Activated T-helper 1 cell treated with anti-CD3 and anti-CD28 coated beads, Interleukin-12 subunit alpha, Interleukin-12 subunit beta, Interleukin-2, Interleukin-4 antibody, amounts not matched to agents 30 ng/mL and 10 ng/mL and 1 ng/mL, durations not matched to agents 14 hours and 24 hours and 36 hours (primary cell): ENCODE measurements at regions of chr12 and their contacts with region 1.

Region 1: DNA sequence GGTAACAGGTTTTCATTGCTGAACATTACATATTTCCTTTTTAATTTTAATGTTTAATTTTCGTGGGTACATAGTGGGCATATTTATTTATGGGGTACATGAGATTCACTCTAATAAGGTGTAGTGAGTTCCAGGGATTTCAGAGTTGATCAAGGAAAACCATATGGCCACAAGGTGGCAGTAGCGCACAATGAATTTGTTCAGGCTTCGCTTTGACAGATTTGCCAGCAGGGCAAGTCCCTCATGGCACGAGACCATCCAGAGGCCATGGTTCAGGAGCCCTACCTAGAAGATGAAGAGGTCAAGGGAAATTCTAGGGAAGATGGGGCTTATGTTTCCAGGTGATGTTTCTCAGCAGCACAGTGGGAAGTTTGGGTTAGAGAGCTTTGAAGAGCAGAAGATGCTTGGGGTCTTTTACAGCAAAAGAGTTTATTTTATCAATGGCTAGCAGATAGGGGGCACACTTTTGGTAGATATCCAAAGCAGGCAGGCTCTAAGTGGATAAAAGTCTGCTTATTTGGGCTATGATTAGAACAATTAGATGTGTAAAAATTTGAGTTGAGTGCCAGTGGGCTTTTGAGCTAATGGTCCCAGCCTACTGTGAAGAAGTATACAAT is 1004.4 kb downstream of the AACS start:
- DNase-seq: peak; percentile 11
- H3K4me3 Mint-ChIP-seq: no peak overlapping the region
- H3K27ac Mint-ChIP-seq: no peak overlapping the region
- H3K4me1 Mint-ChIP-seq: no peaks in the 10 kb centered on the region
- H3K27me3 Mint-ChIP-seq: no peaks in the 10 kb centered on the region

Region 2: GRCh38 chr12:126518596-126519200 is 449.0 kb after region 1 on chr12:
- intact Hi-C with region 1: no loop called
- DNase-seq: no peak
- H3K4me3 Mint-ChIP-seq: no peak overlapping the region
- H3K27ac Mint-ChIP-seq: no peak overlapping the region
- H3K4me1 Mint-ChIP-seq: no peaks in the 10 kb centered on the region
- H3K27me3 Mint-ChIP-seq: no peaks in the 10 kb centered on the region

Region 3: DNA sequence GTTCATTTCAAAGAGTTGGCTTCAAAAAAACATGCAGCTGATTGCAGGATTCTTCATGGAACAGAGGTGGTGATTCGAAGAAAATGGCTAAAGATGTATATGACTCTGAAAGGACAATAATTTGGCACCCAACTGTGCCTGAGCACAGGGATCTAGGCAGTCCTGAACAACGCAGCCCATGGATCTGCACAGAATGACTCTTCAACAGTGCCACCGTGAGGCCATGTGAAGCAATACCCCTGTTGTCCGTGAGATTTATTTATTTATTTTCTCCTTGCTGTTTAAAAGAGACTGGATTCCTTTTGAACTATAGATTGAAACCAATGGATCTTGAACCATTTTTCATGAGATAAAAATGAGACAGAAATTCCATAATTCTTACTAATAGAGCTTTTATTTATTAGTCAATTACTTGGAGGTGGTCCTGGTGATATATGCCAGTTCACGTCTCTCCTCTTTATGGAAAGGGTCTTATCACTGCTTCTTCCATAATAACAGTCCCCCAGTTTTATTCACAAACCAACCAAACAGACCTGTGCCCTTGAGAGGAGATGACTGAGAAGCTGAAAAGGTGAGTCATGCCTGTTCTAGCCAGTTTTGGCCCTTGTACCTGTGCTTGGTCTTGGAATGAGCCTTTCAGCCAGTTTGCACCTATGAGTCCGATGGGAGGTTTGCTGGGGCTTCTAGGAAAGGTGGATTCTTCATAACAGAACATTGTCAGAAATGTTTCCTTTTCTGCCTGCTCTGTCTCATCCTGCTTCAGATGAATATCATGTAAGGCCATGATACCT is 593.8 kb after region 1 on chr12:
- intact Hi-C with region 1: loop called (anchors 5 kb)
- DNase-seq: no peak
- H3K4me3 Mint-ChIP-seq: no peak overlapping the region
- H3K27ac Mint-ChIP-seq: no peak overlapping the region
- H3K4me1 Mint-ChIP-seq: no peaks in the 10 kb centered on the region
- H3K27me3 Mint-ChIP-seq: no peaks in the 10 kb centered on the region

Region 4: GRCh38 chr12:126747530-126748149 is 678.0 kb after region 1 on chr12:
- intact Hi-C with region 1: loop called (anchors 1 kb)
- DNase-seq: peak; percentile 14
- H3K4me3 Mint-ChIP-seq: no peak overlapping the region
- H3K27ac Mint-ChIP-seq: no peak overlapping the region
- H3K4me1 Mint-ChIP-seq: no peaks in the 10 kb centered on the region
- H3K27me3 Mint-ChIP-seq: peaks cover 6% of the 10 kb centered on the region